ENCODE measurements at regions of chr17 and their contacts with region 1.

Region 1: GRCh38 chr17:40086150-40087044 is 14.0 kb downstream of the NR1D1 start:
- DNase-seq: no peak
- H3K4me3 ChIP-seq: no peak overlapping the region
- H3K27me3 ChIP-seq: no peaks in the 10 kb centered on the region
- CTCF ChIP-seq: peak; percentile 82

Region 2: GRCh38 chr17:40062329-40063186 is 23.8 kb before region 1 on chr17 and contains the start of gene THRA:
- CTCF ChIA-PET with region 1: interaction called, 14 read pairs
- POLR2A ChIA-PET with region 1: no interaction called
- DNase-seq: no peak
- H3K4me3 ChIP-seq: peak within 1 kb of the TSS; percentile 97
- H3K27me3 ChIP-seq: no peaks in the 10 kb centered on the region
- CTCF ChIP-seq: no peak
- polyA plus RNA-seq, gene THRA: 32.1 and 43.3 TPM in 2 replicates

Region 3: DNA sequence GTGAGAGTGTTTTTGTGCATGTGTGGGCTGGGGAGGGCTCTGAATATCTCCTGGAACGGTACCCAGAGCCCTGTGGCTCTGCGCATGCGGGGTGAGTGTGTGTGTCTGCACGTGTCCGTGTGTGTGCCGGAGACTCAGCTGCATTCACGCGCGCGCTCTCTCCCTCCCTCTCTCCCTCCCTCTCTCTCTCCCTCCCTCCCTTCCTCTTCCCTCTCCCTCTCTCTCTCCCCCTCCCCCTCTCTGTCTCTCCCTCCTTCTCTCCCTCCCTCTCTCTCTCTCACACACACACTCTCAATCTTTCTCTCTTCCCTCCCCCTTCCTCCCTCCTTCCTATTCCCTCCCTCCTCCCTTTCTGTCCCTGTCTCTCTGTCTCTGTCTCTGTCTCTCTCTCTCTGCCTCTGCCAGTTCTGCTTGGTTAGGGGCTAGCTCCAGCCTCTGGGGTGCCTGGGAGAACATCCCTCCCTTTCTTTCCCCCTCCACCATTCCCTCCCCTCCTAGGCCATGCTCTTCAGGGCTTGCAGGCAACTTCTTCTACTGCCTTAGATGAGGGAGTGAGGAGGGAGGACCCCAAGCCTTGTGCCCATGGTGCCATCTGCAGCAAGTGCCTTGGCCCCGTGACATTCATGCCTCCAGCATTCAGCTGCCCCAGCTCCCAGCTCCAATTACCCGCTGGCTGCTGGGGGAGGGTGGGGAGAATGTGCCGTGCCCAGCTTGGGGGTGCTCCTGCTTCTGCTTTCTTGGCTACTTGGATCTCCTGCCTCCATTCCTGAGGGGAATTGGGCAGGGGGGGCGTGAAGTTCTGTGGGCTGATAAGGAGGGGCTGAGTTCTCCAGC is 17.3 kb before region 1 on chr17:
- CTCF ChIA-PET with region 1: interaction called, 13 read pairs
- POLR2A ChIA-PET with region 1: no interaction called
- DNase-seq: peak; percentile 61
- H3K4me3 ChIP-seq: peak overlapping the region; percentile 15
- H3K27me3 ChIP-seq: no peaks in the 10 kb centered on the region
- CTCF ChIP-seq: no peak

Region 4: GRCh38 chr17:40203131-40203530 is 116.7 kb after region 1 on chr17:
- CTCF ChIA-PET with region 1: no interaction called
- POLR2A ChIA-PET with region 1: no interaction called
- DNase-seq: no peak
- H3K4me3 ChIP-seq: no peak overlapping the region
- H3K27me3 ChIP-seq: no peaks in the 10 kb centered on the region
- CTCF ChIP-seq: no peak